Caco-2 (cell line): ENCODE measurements at regions of chr17 and their contacts with region 1.

Region 1: GRCh38 chr17:40340880-40341807 is 23.4 kb downstream of the GJD3 start:
- DNase-seq: peak; percentile 92 to 93
- H3K4me3 ChIP-seq: peak overlapping the region; percentile 80
- H3K4me3 Mint-ChIP-seq: peak overlapping the region; percentile 89
- H3K27ac Mint-ChIP-seq: peak overlapping the region; percentile 50
- H3K4me1 ChIP-seq: peaks cover 34% of the 10 kb centered on the region
- H3K4me1 Mint-ChIP-seq: peaks cover 27% of the 10 kb centered on the region
- H3K27me3 ChIP-seq: no peaks in the 10 kb centered on the region
- H3K27me3 Mint-ChIP-seq: no peaks in the 10 kb centered on the region
- CTCF ChIP-seq: peak in 1 of 2 experiments; percentile 15

Region 2: DNA sequence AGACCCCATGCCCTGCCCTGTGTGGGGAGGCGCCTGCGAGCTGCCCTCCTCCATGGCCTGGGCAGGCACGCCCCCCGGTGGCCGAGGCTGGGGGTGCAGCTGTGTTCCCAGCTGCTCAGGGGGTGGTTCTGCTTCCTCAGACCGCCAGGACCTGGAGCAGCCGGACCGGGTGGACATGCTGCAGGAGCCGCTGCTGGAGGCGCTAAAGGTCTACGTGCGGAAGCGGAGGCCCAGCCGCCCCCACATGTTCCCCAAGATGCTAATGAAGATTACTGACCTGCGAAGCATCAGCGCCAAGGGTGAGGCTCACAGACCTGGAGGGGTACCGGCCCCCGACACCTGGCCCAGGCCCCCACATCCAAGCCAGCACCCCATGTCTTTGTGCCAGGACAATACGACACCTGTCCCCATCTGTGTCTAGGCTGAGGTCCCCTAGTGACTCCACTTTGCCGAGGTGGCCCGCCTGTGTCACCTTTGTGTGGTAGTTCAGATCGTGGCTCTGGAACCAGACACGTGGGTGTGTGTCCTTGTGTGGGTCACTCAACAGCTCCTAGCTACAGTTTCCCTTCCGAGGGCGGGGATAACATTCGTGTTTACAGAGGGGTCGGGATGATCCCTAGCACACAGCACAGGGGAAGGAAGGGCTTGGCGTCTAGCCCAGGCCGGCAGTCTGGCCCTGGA is 14.1 kb after region 1 on chr17:
- CTCF ChIA-PET with region 1: interaction called, 39 read pairs
- POLR2A ChIA-PET with region 1: no interaction called
- intact Hi-C with region 1: loop called (anchors 1 kb)
- DNase-seq: peak; percentile 72 to 90
- H3K4me3 ChIP-seq: no peak overlapping the region
- H3K4me3 Mint-ChIP-seq: no peak overlapping the region
- H3K27ac Mint-ChIP-seq: no peak overlapping the region
- H3K4me1 ChIP-seq: no peaks in the 10 kb centered on the region
- H3K4me1 Mint-ChIP-seq: peaks cover 8% of the 10 kb centered on the region
- H3K27me3 ChIP-seq: no peaks in the 10 kb centered on the region
- H3K27me3 Mint-ChIP-seq: no peaks in the 10 kb centered on the region
- CTCF ChIP-seq: peak; percentile 93 to 96

Region 3: GRCh38 chr17:40417609-40418427 is 76.7 kb after region 1 on chr17 and contains the start of gene TOP2A:
- CTCF ChIA-PET with region 1: interaction called, 6 read pairs
- POLR2A ChIA-PET with region 1: interaction called, 10 read pairs
- intact Hi-C with region 1: no loop called
- DNase-seq: peak; percentile 99 to 100
- H3K4me3 ChIP-seq: peak within 1 kb of the TSS; percentile 89
- H3K4me3 Mint-ChIP-seq: peak within 1 kb of the TSS; percentile 99
- H3K27ac Mint-ChIP-seq: peak within 1 kb of the TSS; percentile 99
- H3K4me1 ChIP-seq: peaks cover 16% of the 10 kb centered on the region; the same call in 1 of the 2 replicates
- H3K4me1 Mint-ChIP-seq: no peaks in the 10 kb centered on the region
- H3K27me3 ChIP-seq: no peaks in the 10 kb centered on the region
- H3K27me3 Mint-ChIP-seq: no peaks in the 10 kb centered on the region
- CTCF ChIP-seq: no peak
- total RNA-seq, gene TOP2A: 226 and 237 TPM in 2 replicates

Region 4: DNA sequence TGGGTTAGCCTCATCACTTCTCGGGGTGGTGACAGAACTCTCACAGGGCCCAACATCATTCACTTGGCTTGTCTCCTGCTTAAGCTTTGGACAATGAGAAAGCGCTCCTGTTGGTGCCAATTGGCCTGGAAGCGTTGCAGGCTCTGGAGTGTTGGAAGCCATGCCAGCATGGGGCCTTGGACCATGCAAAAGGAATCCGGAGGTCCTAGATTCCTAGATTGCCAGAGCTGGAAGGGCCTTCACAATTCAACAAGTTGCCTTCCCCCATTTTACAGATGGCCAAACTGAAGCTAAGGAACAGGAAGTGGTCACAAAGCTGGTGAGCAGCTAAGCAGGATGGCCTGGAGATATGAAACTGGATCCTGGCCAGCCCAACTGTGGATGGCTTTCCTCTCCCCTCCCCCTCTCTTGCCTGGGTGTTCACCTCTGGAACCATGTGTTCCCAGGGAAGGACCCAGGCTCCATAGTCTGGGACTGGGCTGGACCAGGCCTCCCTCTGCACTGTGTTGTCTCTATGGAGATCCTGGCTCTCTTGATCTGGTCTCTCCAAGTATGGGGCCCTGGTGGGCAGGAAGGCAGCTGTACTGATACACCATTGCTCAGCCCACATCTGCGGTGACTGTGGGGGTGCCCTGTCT is 96.1 kb after region 1 on chr17:
- CTCF ChIA-PET with region 1: no interaction called
- POLR2A ChIA-PET with region 1: no interaction called
- intact Hi-C with region 1: no loop called
- DNase-seq: no peak
- H3K4me3 ChIP-seq: no peak overlapping the region
- H3K4me3 Mint-ChIP-seq: no peak overlapping the region
- H3K27ac Mint-ChIP-seq: no peak overlapping the region
- H3K4me1 ChIP-seq: no peaks in the 10 kb centered on the region
- H3K4me1 Mint-ChIP-seq: peaks cover 6% of the 10 kb centered on the region
- H3K27me3 ChIP-seq: no peaks in the 10 kb centered on the region
- H3K27me3 Mint-ChIP-seq: no peaks in the 10 kb centered on the region
- CTCF ChIP-seq: no peak